ENCODE measurements at regions of chr5 and their contacts with region 1.

Region 1: GRCh38 chr5:97009212-97009898 is 73.5 kb downstream of the LNPEP start:
- DNase-seq: peak in 4 of 14 experiments; percentile 17 to 71 (median 64)
- ATAC-seq: peak; percentile 63
- H3K4me3 ChIP-seq: no peak overlapping the region
- H3K4me3 Mint-ChIP-seq: peak overlapping the region; percentile 55
- H3K27ac ChIP-seq: no peak overlapping the region
- H3K27ac Mint-ChIP-seq: peak overlapping the region; percentile 67
- H3K4me1 ChIP-seq: peaks cover 4% of the 10 kb centered on the region
- H3K4me1 Mint-ChIP-seq: peaks cover 36% of the 10 kb centered on the region
- H3K27me3 ChIP-seq: no peaks in the 10 kb centered on the region
- H3K27me3 Mint-ChIP-seq: no peaks in the 10 kb centered on the region
- CTCF ChIP-seq: no peak

Region 2: GRCh38 chr5:96776621-96777020 is 232.7 kb before region 1 on chr5:
- CTCF ChIA-PET with region 1: no interaction called
- POLR2A ChIA-PET with region 1: no interaction called
- intact Hi-C with region 1: loop called in 1 of 2 experiments (anchors 10 kb)
- DNase-seq: no peak
- ATAC-seq: no peak
- H3K4me3 ChIP-seq: no peak overlapping the region
- H3K4me3 Mint-ChIP-seq: no peak overlapping the region
- H3K27ac ChIP-seq: no peak overlapping the region
- H3K27ac Mint-ChIP-seq: peak overlapping the region; percentile 11
- H3K4me1 ChIP-seq: no peaks in the 10 kb centered on the region
- H3K4me1 Mint-ChIP-seq: peaks cover under 1% of the 10 kb centered on the region
- H3K27me3 ChIP-seq: no peaks in the 10 kb centered on the region
- H3K27me3 Mint-ChIP-seq: no peaks in the 10 kb centered on the region
- CTCF ChIP-seq: no peak

Region 3: GRCh38 chr5:96986450-96986849 is 22.9 kb before region 1 on chr5:
- CTCF ChIA-PET with region 1: no interaction called
- POLR2A ChIA-PET with region 1: no interaction called
- intact Hi-C with region 1: no loop called
- DNase-seq: no peak
- ATAC-seq: no peak
- H3K4me3 ChIP-seq: no peak overlapping the region
- H3K4me3 Mint-ChIP-seq: no peak overlapping the region
- H3K27ac ChIP-seq: no peak overlapping the region
- H3K27ac Mint-ChIP-seq: peak overlapping the region; percentile 15
- H3K4me1 ChIP-seq: peaks cover 3% of the 10 kb centered on the region
- H3K4me1 Mint-ChIP-seq: peaks cover 62% of the 10 kb centered on the region
- H3K27me3 ChIP-seq: no peaks in the 10 kb centered on the region
- H3K27me3 Mint-ChIP-seq: no peaks in the 10 kb centered on the region
- CTCF ChIP-seq: no peak

Region 4: GRCh38 chr5:97101189-97101910 is 92.0 kb after region 1 on chr5:
- CTCF ChIA-PET with region 1: no interaction called
- POLR2A ChIA-PET with region 1: no interaction called
- intact Hi-C with region 1: no loop called
- DNase-seq: no peak
- ATAC-seq: no peak
- H3K4me3 ChIP-seq: no peak overlapping the region
- H3K4me3 Mint-ChIP-seq: no peak overlapping the region
- H3K27ac ChIP-seq: no peak overlapping the region
- H3K27ac Mint-ChIP-seq: no peak overlapping the region
- H3K4me1 ChIP-seq: no peaks in the 10 kb centered on the region
- H3K4me1 Mint-ChIP-seq: no peaks in the 10 kb centered on the region
- H3K27me3 ChIP-seq: peaks cover 0 to 1% of the 10 kb centered on the region in 2 experiments
- H3K27me3 Mint-ChIP-seq: peaks cover 4% of the 10 kb centered on the region
- CTCF ChIP-seq: no peak

Region 5: DNA sequence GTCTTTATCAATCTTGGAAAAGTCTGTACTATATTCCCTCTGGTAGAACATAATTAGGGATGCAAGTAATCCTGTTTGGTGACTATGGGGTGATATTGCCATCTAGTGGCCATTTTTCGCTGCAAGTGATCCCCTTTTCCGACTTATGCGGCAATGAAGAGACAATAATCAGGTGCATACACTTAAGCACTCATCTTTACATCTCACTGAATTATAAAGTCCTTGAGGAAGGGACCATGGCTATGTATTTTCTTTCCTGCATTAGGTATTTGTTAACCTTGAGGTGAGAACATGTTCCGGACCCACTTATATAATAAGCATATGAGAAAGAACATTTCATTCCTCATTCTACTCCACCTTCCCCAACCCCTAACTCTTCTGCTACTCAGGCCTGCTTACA is 152.7 kb after region 1 on chr5:
- CTCF ChIA-PET with region 1: interaction called, 3 read pairs
- POLR2A ChIA-PET with region 1: no interaction called
- intact Hi-C with region 1: loop called in 1 of 2 experiments (anchors 5 kb)
- DNase-seq: peak in 12 of 14 experiments; percentile 16 to 82 (median 34)
- ATAC-seq: peak; percentile 49
- H3K4me3 ChIP-seq: no peak overlapping the region
- H3K4me3 Mint-ChIP-seq: no peak overlapping the region
- H3K27ac ChIP-seq: no peak overlapping the region
- H3K27ac Mint-ChIP-seq: no peak overlapping the region
- H3K4me1 ChIP-seq: no peaks in the 10 kb centered on the region
- H3K4me1 Mint-ChIP-seq: peaks cover 14% of the 10 kb centered on the region
- H3K27me3 ChIP-seq: no peaks in the 10 kb centered on the region
- H3K27me3 Mint-ChIP-seq: no peaks in the 10 kb centered on the region
- CTCF ChIP-seq: peak; percentile 98